BJ (cell line): ENCODE measurements at regions of chr3 and their contacts with region 1.

Region 1: GRCh38 chr3:124467980-124468902 is 262.0 kb upstream of the UMPS start:
- DNase-seq: no peak
- H3K4me3 ChIP-seq: no peak overlapping the region
- H3K27me3 ChIP-seq: no peaks in the 10 kb centered on the region
- CTCF ChIP-seq: peak; percentile 98

Region 2: GRCh38 chr3:123980539-123980938 is 487.7 kb before region 1 on chr3:
- CTCF ChIA-PET with region 1: no interaction called
- POLR2A ChIA-PET with region 1: no interaction called
- DNase-seq: no peak
- H3K4me3 ChIP-seq: peak overlapping the region; percentile 28; the same call in 1 of the 2 replicates
- H3K27me3 ChIP-seq: no peaks in the 10 kb centered on the region
- CTCF ChIP-seq: no peak

Region 3: DNA sequence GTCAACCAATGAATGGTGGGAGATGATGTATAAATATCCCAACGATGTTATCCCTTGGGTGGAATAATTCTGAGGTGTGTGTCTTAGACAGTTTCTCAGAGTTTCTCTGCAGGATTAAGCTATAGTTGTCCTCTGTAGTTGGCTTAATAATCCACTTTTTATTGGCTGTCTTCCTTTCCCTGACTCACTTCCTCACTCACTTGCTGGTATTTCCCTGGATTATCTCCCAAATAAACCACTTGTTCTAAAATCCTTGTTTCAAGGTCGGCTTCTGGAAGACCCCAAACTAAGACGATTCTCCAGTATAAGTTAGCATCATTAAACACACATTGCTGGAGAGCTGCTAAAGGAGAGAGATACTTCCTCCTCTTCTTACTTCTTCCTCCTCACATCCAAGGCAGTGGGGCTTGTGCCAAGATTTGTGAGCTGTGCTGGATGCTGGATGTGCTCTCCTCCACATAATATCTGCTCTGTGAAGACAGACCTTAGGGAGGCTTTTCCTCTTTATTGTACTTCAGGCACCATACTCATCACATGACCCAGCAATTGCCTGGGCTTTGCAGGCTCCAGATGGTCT is 453.8 kb before region 1 on chr3:
- CTCF ChIA-PET with region 1: interaction called, 47 read pairs
- POLR2A ChIA-PET with region 1: no interaction called
- DNase-seq: no peak
- H3K4me3 ChIP-seq: no peak overlapping the region
- H3K27me3 ChIP-seq: no peaks in the 10 kb centered on the region; the same call in 1 of the 2 replicates
- CTCF ChIP-seq: no peak

Region 4: DNA sequence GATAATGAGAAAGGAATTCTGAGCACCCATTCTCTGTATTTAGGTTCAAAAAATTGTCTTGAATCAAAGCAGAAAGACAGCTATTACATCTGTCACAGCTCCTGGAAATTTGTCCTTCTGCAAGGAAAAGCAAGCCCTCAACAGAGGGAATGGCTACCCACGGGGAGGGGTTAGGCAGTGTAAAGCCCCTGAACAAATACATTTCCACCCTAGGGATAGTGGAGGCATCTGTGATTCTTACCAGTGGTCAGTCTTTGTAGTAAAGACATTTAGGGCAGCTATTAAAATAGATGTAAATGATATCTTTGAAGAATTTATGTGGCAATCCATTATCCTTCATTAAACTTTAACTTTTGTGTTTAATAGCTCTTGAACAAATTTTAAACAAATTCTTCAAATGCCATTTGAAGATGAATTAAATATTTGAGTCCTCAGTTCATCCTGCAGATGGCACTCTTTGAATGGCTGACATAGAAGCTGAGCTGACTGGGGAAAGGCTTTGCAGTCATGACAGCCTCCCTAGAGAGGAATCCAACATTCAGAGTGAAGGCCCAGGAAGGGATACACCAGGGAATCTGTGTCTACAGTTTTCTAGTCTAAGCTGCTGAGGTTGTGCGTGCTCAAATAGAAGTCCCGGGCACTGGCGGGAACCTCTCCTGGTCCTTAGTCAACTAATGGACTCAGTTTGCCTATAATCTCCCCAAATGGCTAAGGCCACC is 116.7 kb before region 1 on chr3:
- CTCF ChIA-PET with region 1: interaction called, 101 read pairs
- POLR2A ChIA-PET with region 1: no interaction called
- DNase-seq: peak; percentile 62
- H3K4me3 ChIP-seq: no peak overlapping the region
- H3K27me3 ChIP-seq: no peaks in the 10 kb centered on the region; the same call in 1 of the 2 replicates
- CTCF ChIP-seq: peak; percentile 57

Region 5: GRCh38 chr3:124362455-124362854 is 105.8 kb before region 1 on chr3:
- CTCF ChIA-PET with region 1: interaction called, 12 read pairs
- POLR2A ChIA-PET with region 1: no interaction called
- DNase-seq: no peak
- H3K4me3 ChIP-seq: no peak overlapping the region
- H3K27me3 ChIP-seq: no peaks in the 10 kb centered on the region
- CTCF ChIP-seq: no peak

Region 6: DNA sequence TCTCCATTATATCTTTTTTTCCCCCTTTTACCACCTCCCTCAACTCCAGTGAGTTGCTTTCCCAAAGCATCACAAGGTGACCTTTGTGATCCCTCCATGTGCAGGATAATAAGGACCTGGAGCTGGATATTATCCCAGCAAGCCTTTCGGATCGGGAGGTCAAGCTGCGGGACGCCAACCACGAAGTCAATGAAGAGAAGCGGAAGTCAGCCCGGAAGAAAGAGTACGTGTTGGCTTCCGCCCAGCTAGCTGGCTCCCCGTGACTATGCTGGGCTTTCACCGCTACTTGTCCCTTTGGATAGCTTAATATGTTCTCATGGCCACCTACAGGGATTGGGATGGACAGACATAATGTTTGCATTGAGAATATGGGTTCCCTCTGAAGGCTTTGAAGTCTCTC is 11.7 kb before region 1 on chr3:
- CTCF ChIA-PET with region 1: interaction called, 21 read pairs
- POLR2A ChIA-PET with region 1: no interaction called
- DNase-seq: no peak
- H3K4me3 ChIP-seq: no peak overlapping the region
- H3K27me3 ChIP-seq: no peaks in the 10 kb centered on the region; the same call in 1 of the 2 replicates
- CTCF ChIP-seq: no peak

Region 7: GRCh38 chr3:124486324-124486723 is 18.1 kb after region 1 on chr3:
- CTCF ChIA-PET with region 1: interaction called, 10 read pairs
- POLR2A ChIA-PET with region 1: no interaction called
- DNase-seq: no peak
- H3K4me3 ChIP-seq: no peak overlapping the region
- H3K27me3 ChIP-seq: peaks cover 2% of the 10 kb centered on the region; the same call in 1 of the 2 replicates
- CTCF ChIP-seq: no peak

Region 8: DNA sequence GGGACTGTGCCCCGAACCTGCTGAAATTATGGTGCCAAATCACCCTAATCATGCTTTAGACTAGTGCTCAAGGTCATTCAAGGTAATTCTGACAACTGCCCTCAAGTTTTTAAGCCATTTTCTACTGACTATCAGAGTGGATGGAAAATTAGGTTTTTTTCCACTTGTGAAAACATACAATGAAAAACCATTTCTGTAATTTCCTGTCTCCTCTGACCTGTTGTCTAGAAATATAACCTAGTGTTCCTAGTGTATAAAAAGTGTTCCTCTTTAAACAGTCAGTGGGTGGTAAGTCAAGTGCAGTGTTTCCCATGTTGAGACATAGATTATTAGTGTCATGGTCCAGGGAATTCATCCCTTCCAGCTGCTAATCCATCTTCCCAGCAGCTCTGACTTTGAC is 29.2 kb after region 1 on chr3:
- CTCF ChIA-PET with region 1: no interaction called
- POLR2A ChIA-PET with region 1: no interaction called
- DNase-seq: no peak
- H3K4me3 ChIP-seq: no peak overlapping the region
- H3K27me3 ChIP-seq: no peaks in the 10 kb centered on the region
- CTCF ChIP-seq: no peak